Cardiac septum (tissue), 1 donor: ENCODE measurements at regions of chr6 and their contacts with region 1.

Region 1: DNA sequence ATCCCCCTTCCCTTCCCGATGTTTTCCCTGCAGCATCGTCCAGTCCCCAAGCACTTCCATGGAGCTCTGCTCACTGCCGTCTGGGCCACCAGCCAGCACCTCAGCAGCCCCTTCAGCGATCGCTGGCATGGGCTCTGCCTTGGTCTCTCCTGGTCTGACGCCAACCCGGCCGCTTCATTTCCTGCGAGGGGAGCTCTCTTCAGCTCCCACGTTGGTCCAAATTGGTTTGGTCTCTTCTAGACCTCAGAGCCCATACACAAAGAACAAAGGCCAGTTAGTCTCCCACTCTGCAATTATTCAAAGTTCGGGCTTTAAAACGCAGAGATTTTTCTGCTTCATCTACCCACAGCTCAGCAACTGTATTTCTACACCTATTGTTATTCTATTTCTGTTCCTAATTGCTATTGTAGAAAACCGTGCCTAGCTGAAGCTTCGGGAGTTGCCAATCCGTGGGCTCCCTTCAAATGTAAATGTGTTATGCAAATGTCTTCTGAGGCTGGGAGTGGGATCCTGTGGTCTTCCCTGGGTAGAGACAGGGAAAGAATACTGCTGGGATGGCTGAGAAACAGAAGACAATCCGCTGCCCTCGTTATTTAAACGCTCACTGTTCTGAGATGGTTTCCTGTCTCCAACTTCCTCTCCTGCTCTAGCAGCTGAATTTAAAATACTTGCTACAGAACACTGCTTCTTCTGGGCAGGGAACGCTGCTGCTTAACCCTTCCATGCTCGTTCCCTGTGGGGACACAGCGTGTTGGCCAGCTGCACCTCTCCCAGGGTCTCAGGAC is 154.2 kb upstream of the QKI start:
- DNase-seq: no peak

Region 2: DNA sequence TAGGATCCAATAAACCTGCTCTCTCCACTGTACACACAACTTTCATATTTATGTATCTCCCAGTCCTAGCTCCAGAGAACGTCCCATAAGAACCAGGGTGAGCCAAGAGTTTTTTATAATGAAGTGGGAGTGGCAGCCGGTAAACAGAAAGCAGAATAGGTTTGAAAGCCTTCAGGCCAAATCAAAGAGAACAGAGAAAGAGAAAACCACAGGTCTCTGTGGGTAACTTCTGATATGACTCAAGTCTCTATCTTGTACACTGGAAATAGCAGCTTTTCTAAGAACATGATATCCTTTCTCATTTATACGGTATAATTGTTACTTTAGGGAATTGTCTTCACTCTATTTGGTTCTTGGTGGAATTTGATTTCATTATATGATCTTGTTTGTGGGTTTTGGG is 259.0 kb before region 1 on chr6:
- intact Hi-C with region 1: no loop called
- DNase-seq: no peak

Region 3: DNA sequence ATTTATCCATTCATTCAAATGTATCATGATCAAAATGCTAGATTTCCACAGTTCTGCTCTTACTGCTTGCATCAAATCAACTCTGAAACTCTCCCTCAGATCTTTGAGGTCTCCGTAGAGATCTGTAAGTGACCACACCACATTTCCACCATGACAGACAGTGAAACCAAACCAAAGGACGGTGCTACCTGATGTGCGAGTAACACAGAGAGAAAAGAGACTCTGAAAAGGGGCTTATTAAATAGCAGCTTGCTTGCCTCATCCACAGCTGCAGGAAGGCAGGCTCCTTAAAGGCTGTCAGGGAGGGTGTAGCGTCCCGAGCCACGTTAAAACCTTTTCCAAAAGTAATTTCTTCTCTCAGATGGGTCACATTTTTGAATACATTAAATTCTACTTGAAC is 196.7 kb before region 1 on chr6:
- intact Hi-C with region 1: no loop called
- DNase-seq: no peak

Region 4: GRCh38 chr6:163085861-163086623 is 174.3 kb before region 1 on chr6:
- intact Hi-C with region 1: loop called (anchors 5 kb)
- DNase-seq: no peak